Activated CD4-positive, alpha-beta T cell treated with anti-CD3 and anti-CD28 coated beads for 36 hours (primary cell): ENCODE measurements at regions of chr3 and their contacts with region 1.

Region 1: GRCh38 chr3:136196401-136197158 is 445 bp upstream of the MSL2 start:
- DNase-seq: peak; percentile 100
- ATAC-seq: peak; percentile 82
- H3K4me3 Mint-ChIP-seq: peak overlapping the region; percentile 100
- H3K27ac Mint-ChIP-seq: peak overlapping the region; percentile 98
- H3K4me1 Mint-ChIP-seq: peaks cover 25% of the 10 kb centered on the region
- H3K27me3 Mint-ChIP-seq: no peaks in the 10 kb centered on the region

Region 2: DNA sequence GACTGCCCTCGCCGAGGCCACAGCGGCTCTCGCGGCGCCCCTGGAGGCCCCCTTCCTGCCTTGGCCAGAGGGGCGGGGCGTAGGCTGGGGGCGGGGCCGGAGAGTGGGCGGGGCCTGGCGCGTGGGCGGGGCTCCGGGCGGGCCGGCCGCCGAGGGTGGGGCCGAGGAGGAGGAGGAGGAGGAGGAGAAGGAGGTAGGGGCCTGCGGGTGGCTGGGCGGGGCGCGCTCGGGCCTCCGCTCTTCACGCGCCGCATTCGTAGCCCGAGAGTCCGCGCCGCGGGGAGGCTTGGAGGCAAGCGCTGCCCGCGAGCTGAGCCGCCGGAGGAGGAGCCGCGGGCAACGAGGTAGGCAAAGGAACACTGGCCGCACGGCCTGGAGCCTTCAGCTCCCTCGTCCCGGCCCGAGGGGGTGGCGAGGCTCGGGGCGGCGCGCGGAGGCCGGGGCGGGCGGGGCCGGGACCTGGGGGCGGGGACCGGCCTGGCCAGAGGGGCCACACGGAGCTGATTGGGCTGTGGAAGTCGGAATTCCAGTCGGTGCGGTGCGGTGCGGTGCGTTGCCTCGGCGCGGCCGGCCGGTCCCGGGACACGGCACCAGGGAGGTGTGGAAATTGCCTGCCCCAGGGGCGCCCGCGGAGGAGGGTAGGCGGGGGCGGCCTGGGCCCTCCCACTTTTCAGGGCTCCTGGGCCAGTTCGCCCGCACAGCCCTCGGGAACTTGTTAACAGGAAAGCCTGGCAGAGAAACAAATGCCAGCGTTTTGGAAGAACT is 230.9 kb before region 1 on chr3 and contains the start of gene PPP2R3A:
- CTCF ChIA-PET with region 1: no interaction called
- POLR2A ChIA-PET with region 1: no interaction called
- intact Hi-C with region 1: loop called in 1 of 2 experiments (anchors 5 kb)
- DNase-seq: peak; percentile 85
- ATAC-seq: peak; percentile 93
- H3K4me3 Mint-ChIP-seq: peak within 1 kb of the TSS; percentile 65
- H3K27ac Mint-ChIP-seq: no peak within 1 kb of the TSS
- H3K4me1 Mint-ChIP-seq: peaks cover 11% of the 10 kb centered on the region
- H3K27me3 Mint-ChIP-seq: peaks cover 30% of the 10 kb centered on the region
- total RNA-seq, gene PPP2R3A: 0.18 to 0.51 TPM

Region 3: DNA sequence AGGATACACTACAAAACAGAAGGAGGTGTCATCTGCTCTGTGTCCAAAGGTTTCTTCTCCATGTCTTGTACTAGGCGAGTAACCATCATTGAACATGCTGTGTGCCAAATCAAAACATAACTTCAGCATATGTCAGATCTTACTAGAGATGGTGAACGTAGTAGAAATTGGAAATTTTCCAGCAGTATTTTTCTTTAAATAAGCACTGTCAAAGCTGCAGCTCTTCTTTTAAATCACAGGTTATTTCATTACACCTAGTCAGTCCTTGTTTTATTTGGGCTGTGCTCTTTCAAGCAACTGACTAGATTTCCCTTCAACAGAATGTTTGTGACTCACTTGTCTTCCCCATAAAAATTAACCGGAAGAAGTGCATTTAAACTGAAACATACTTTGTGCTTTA is 46.9 kb before region 1 on chr3:
- CTCF ChIA-PET with region 1: no interaction called
- POLR2A ChIA-PET with region 1: interaction called, 4 read pairs
- intact Hi-C with region 1: loop called in 1 of 2 experiments (anchors 5 kb)
- DNase-seq: no peak
- ATAC-seq: peak; percentile 81
- H3K4me3 Mint-ChIP-seq: no peak overlapping the region
- H3K27ac Mint-ChIP-seq: peak overlapping the region; percentile 69
- H3K4me1 Mint-ChIP-seq: peaks cover 72% of the 10 kb centered on the region
- H3K27me3 Mint-ChIP-seq: no peaks in the 10 kb centered on the region

Region 4: GRCh38 chr3:136186344-136186743 is 10.2 kb before region 1 on chr3:
- CTCF ChIA-PET with region 1: interaction called, 4 read pairs
- POLR2A ChIA-PET with region 1: interaction called, 7 read pairs
- intact Hi-C with region 1: loop called in 1 of 2 experiments (anchors 1 kb)
- DNase-seq: peak; percentile 32
- ATAC-seq: peak; percentile 34
- H3K4me3 Mint-ChIP-seq: no peak overlapping the region
- H3K27ac Mint-ChIP-seq: peak overlapping the region; percentile 34
- H3K4me1 Mint-ChIP-seq: peaks cover 91% of the 10 kb centered on the region
- H3K27me3 Mint-ChIP-seq: no peaks in the 10 kb centered on the region

Region 5: GRCh38 chr3:136899622-136900158 is 703.1 kb after region 1 on chr3:
- CTCF ChIA-PET with region 1: no interaction called
- POLR2A ChIA-PET with region 1: no interaction called
- intact Hi-C with region 1: no loop called
- DNase-seq: no peak
- ATAC-seq: peak; percentile 92
- H3K4me3 Mint-ChIP-seq: peak overlapping the region; percentile 3
- H3K27ac Mint-ChIP-seq: peak overlapping the region; percentile 49
- H3K4me1 Mint-ChIP-seq: peaks cover 56% of the 10 kb centered on the region
- H3K27me3 Mint-ChIP-seq: no peaks in the 10 kb centered on the region

Region 6: DNA sequence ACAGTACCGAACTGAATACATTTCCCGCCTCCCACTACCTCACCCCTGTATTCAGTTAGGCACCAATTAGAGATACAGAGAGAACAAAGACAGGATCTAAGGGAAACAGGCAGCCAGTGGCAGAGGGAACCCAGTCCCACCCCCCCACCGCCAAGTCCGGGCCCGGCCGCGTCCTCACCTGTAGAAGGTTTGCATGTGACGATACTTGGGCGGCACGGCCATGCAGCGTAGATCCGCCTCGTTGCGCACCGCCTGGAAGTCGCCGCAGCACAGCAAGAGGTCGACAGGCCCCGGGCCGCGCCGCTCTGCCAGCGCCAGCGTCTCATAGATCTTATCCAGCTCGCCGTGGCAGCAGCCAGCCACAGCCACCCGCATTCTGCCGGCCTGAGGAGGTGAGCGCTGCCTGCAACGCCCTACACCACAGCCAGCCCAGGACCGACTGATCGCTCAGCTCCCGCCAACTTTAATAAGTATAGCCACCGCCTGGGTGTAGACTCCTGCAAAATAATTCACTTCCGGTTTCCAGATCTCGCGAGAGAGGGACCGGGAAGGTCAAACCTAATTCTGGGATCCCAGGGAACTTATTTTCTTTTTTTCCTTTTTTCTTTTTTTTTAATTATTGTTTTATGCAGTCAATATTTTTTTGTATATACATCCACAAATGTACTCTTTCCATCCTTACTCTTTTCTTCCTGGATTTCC is 1978.0 kb after region 1 on chr3 and contains the start of gene DBR1:
- CTCF ChIA-PET with region 1: no interaction called
- POLR2A ChIA-PET with region 1: interaction called, 7 read pairs
- intact Hi-C with region 1: loop called in 1 of 2 experiments (anchors 10 kb)
- DNase-seq: peak; percentile 85
- ATAC-seq: peak; percentile 85
- H3K4me3 Mint-ChIP-seq: peak within 1 kb of the TSS; percentile 89
- H3K27ac Mint-ChIP-seq: peak within 1 kb of the TSS; percentile 96
- H3K4me1 Mint-ChIP-seq: peaks cover 30% of the 10 kb centered on the region
- H3K27me3 Mint-ChIP-seq: no peaks in the 10 kb centered on the region
- total RNA-seq, gene DBR1: 16.4 to 22.0 TPM